BJ (cell line): ENCODE measurements at regions of chr2 and their contacts with region 1.

Region 1: DNA sequence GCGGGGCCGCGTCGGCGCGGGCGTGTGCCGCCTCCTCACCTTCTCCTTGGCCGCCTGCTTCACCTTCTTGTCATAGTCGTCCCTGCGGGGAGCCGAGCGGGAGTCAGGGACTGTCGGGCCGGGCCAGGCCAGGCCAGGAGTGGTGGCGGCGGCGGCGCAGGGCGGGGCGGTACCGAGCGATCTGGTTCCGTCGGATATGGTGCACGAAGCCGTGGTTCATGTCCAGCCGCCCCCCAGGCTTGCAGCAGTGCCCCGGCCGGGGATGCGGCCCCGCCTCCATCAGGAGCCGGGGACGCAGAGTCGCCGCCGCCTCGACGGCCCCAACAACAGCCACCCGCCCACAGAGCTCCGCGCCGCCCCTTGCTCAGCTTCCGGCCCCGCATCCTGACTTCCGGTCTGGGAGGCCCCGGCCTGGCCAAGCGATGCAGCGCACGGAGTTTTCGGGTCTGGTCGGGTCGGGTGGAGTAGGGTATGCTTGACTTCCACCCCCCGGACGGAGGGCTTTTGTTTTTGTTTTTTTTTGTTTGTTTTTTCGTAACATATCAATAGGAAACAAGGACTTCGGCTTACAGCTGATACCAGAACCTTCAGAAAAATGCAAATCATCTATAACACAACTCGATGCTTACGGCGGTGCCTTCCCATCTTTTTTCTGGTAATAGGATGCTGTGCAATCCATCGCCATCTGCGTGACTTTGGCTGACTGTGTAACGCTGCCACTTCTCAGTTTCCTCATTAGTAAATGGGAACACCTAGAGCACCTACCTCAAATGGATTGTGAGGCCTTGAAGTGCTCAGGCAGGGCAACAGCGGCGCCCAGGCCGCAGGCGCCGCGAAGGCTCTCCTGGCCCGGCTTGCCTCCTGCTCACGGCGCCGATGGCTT is at the start of gene C2orf68:
- DNase-seq: no peak
- H3K4me3 ChIP-seq: peak within 1 kb of the TSS; percentile 96
- H3K27me3 ChIP-seq: no peaks in the 10 kb centered on the region
- CTCF ChIP-seq: no peak
- polyA plus RNA-seq, gene C2orf68: 16.4 and 18.9 TPM in 2 replicates

Region 2: GRCh38 chr2:85545780-85546240 is 66.1 kb before region 1 on chr2:
- CTCF ChIA-PET with region 1: no interaction called
- POLR2A ChIA-PET with region 1: no interaction called
- DNase-seq: no peak
- H3K4me3 ChIP-seq: no peak overlapping the region
- H3K27me3 ChIP-seq: no peaks in the 10 kb centered on the region
- CTCF ChIP-seq: no peak

Region 3: DNA sequence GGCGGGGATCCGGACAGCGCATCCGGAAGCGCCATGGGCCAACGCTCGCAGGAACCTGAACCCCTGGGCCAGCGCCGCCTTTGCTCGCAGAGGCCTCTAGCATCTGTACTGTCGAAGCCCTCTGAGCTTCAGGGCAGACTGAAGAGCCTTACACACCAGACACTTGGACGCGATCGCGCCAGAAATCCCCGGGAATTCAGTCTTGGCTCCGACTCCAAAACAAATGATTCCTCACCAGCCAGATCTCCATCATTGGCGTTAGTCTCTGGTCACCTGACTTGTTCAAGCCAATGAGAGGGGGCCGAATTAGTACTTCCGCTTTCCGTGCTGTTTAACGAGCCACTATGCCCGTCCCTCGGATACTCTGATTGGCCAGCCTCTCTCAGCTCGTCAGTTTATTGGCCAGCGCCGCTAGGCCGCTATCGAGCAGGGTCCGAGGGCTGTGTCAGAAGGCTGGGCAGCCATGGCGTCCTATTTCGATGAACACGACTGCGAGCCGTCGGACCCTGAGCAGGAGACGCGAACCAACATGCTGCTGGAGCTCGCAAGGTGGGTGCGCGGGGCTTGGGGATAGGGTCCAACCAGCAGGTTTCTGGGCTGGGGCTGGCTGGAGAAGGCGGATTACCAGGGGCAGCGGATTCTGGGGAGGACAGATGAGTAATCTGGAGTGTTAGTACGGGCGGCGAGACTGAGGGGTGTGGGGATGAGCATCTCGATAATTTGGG is 16.5 kb before region 1 on chr2 and contains the start of gene RNF181:
- CTCF ChIA-PET with region 1: interaction called, 5 read pairs
- POLR2A ChIA-PET with region 1: interaction called, 11 read pairs
- DNase-seq: peak; percentile 97
- H3K4me3 ChIP-seq: peak within 1 kb of the TSS; percentile 95
- H3K27me3 ChIP-seq: no peaks in the 10 kb centered on the region
- CTCF ChIP-seq: no peak
- polyA plus RNA-seq, gene RNF181: 376 and 394 TPM in 2 replicates

Region 4: GRCh38 chr2:85623991-85624390 is 12.0 kb after region 1 on chr2:
- CTCF ChIA-PET with region 1: no interaction called
- POLR2A ChIA-PET with region 1: no interaction called
- DNase-seq: no peak
- H3K4me3 ChIP-seq: no peak overlapping the region
- H3K27me3 ChIP-seq: no peaks in the 10 kb centered on the region
- CTCF ChIP-seq: no peak